Prostate gland (tissue), 2 donors: ENCODE measurements at regions of chr11 and their contacts with region 1.

Region 1: DNA sequence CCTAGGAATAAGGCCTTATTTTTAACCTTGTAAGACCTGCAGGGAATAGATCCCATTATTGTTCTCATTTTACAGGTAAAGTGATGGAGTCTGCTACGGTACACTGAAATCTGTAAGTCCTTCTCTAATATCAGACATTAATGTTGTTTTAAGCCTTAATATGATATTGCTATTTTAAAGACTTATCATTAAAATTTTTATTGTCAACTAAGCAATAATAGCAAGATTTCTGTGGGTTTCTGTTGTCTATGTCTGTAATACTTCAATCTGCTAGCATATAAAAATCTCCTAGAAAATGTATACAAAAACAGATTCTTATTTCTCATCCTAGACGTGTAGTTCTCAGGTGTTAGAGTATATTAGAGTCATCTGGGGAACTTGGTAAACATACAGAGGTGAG is 317.5 kb upstream of the TENM4 start:
- DNase-seq: no peak
- H3K4me3 ChIP-seq: no peak overlapping the region
- H3K27ac ChIP-seq: no peak overlapping the region
- H3K4me1 ChIP-seq: no peaks in the 10 kb centered on the region
- H3K27me3 ChIP-seq: no peaks in the 10 kb centered on the region
- CTCF ChIP-seq: no peak
- POLR2A ChIP-seq: no peak

Region 2: DNA sequence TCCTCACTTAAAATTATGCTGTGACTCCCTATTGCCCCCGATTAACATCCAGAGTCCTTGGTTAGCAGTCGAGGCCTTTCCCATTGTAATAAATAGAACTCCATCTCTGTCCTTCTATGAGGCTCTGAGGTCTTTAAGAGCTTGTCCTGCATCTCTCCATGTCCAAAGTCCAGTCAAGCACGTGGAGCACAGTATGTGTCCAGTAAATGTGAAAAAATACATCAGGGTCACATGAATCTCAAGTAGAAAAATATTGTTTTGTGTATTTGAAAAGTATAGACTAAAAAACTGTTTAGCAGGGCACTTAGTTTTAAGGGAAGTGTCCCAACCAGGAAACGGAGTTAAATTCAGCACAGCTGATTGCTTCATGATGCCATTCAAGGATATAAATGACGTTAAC is 18.7 kb before region 1 on chr11:
- intact Hi-C with region 1: loop called (anchors 2 kb)
- DNase-seq: no peak
- H3K4me3 ChIP-seq: no peak overlapping the region
- H3K27ac ChIP-seq: no peak overlapping the region
- H3K4me1 ChIP-seq: no peaks in the 10 kb centered on the region
- H3K27me3 ChIP-seq: no peaks in the 10 kb centered on the region
- CTCF ChIP-seq: no peak
- POLR2A ChIP-seq: no peak